Ovary (tissue), 10 donors: ENCODE measurements at regions of chr1 and their contacts with region 1.

Region 1: GRCh38 chr1:16958503-16958902 is 21.9 kb downstream of the MFAP2 start:
- DNase-seq: no peak
- H3K4me3 ChIP-seq: no peak overlapping the region
- H3K27ac ChIP-seq: no peak overlapping the region
- H3K4me1 ChIP-seq: peaks cover 2% of the 10 kb centered on the region
- H3K27me3 ChIP-seq: no peaks in the 10 kb centered on the region
- CTCF ChIP-seq: no peak
- EP300 ChIP-seq: no peak
- POLR2A ChIP-seq: no peak

Region 2: DNA sequence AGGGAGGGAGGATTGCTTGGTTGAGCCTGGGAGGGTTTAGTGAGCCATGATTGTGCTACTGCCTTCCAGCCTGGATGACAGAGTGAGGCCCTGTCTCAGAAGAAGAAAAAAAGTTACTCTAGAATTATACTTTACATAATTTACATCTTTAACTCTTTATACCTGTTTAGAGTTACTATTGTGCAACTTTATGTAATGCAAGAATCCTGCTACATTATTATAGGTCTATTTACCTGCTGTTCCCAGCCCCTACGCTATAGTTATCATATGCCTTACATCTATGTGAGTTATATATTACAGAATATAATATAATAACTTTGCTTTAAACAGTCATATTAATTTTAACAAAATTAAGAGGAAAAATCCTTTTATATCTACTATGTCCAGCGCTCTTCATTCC is 81.0 kb after region 1 on chr1:
- intact Hi-C with region 1: loop called in 2 of 4 experiments (anchors 2 to 5 kb)
- DNase-seq: no peak
- H3K4me3 ChIP-seq: no peak overlapping the region
- H3K27ac ChIP-seq: no peak overlapping the region
- H3K4me1 ChIP-seq: no peaks in the 10 kb centered on the region
- H3K27me3 ChIP-seq: no peaks in the 10 kb centered on the region
- CTCF ChIP-seq: no peak
- EP300 ChIP-seq: no peak
- POLR2A ChIP-seq: no peak

Region 3: DNA sequence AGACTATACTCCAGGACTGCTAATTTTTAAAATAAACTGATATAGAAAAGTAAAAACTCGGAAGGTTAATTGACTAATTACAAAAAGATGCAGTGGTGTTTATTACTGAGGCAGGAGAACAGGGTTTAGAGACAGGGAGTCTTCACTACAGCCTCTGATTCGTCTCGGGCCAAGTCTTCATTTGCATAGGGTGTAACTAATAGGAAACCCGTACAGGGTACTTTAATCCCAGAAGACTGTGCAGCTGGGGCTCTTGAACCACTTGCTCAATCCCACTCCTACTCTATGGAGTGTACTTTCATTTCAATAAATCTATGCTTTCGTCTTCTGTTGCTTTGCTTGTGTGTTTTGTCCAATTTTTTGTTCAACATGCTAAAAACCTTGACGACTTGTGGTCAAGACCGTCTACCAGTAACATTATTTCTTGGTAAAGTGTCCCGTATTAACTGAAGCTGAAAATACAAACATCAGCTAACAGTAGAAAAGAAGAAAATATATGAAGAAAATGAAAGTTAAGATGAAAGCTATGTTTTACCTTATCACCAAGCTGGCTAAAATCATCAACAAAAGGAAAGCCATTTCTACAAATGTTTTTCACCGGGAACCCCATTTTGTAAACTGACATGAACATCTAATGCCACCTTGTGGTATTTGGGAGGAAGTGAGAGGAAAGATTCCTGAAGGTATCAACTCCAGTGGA is 87.3 kb after region 1 on chr1:
- intact Hi-C with region 1: loop called in 3 of 4 experiments (anchors 2 to 5 kb)
- DNase-seq: no peak
- H3K4me3 ChIP-seq: peak overlapping the region; percentile 5
- H3K27ac ChIP-seq: no peak overlapping the region
- H3K4me1 ChIP-seq: peaks cover 3% of the 10 kb centered on the region
- H3K27me3 ChIP-seq: no peaks in the 10 kb centered on the region
- CTCF ChIP-seq: peak; percentile 37 to 88 (median 86)
- EP300 ChIP-seq: no peak
- POLR2A ChIP-seq: no peak